Posterior vena cava (tissue), 2 donors: ENCODE measurements at regions of chr4 and their contacts with region 1.

Region 1: DNA sequence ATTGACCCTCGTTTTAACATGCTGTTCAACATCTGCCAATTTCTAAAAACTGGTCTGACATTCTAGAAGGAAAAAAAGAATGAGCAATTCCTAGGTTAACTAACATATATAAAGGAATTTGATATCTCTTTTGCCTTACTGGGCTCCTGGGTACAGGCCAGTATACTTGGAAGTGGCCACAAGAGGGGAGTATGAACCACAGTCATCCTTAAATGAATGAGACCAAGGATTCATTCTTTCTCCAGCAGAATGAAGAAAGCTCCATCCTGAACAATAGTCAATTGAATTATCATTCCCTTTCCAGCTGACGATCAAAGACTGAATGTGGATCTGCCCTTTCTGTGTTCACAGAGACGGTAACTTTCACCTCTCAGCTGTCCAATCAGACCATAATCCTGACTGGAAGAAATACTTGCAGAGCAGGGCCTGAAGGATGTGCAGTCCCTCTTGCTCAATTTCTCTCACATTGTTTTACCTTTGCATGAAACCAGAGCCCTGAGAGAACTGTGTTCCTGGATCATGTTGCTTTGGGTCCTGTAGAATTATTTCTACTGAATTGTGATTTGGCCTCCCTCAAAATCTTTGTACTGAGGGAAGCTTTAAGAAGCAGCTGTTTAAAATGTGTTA is 14.8 kb upstream of the SPARCL1 start:
- DNase-seq: no peak

Region 2: DNA sequence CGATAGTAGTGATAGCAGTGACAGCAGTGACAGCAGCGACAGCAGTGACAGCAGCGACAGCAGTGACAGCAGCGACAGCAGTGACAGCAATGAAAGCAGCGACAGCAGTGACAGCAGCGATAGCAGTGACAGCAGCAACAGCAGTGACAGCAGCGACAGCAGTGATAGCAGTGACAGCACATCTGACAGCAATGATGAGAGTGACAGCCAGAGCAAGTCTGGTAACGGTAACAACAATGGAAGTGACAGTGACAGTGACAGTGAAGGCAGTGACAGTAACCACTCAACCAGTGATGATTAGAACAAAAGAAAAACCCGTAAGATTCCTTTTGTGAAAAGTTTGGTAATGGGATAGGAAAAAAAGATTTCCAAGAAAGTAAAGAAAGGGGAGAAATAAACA is 72.3 kb after region 1 on chr4:
- intact Hi-C with region 1: loop called in 1 of 2 experiments (anchors 2 kb)
- DNase-seq: no peak

Region 3: GRCh38 chr4:87679449-87680169 is 135.7 kb after region 1 on chr4:
- intact Hi-C with region 1: loop called in 1 of 2 experiments (anchors 10 kb)
- DNase-seq: no peak

Region 4: DNA sequence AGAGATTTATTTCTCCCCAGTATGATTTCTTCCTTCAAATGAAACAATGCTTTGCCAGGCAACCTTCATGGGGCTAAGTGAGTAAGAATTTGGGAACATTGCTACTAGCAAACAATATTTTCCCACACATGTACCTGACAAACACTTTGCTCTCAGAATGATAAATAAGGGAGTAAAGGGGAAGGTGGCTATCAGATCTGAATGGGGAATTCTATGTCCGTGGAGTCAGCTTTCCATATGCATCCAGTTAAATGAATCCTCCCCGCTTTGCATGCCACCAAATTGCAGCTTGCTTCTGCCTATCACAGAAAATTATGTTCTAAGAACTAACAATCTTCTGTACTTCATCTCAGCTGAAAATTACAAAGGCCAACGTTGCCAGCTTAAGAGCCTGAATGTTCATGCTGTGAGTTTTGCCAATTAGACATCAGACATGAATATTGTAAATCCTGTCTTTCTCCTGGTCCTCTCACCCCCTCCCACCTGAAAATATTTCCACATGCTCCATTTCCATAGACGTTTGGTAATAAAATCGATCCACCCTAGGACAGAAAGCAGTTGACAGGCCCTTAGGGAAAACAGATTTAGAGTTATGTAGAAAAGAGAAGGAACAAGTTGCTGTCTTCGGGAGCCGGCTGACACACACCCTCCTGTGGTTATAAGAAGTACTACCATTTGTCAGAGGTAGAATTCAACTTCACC is 295.1 kb after region 1 on chr4:
- intact Hi-C with region 1: loop called (anchors 5 kb)
- DNase-seq: no peak

Region 5: GRCh38 chr4:87848622-87849351 is 304.8 kb after region 1 on chr4:
- intact Hi-C with region 1: loop called (anchors 5 kb)
- DNase-seq: peak; percentile 76